ENCODE measurements at regions of chr13 and their contacts with region 1.

Region 1: GRCh38 chr13:51814825-51815650 is 11.1 kb upstream of the DHRS12 start:
- DNase-seq: peak; percentile 66
- H3K4me3 Mint-ChIP-seq: peak overlapping the region; percentile 37
- H3K27ac Mint-ChIP-seq: no peak overlapping the region
- H3K4me1 Mint-ChIP-seq: peaks cover 52% of the 10 kb centered on the region
- H3K27me3 Mint-ChIP-seq: peaks cover 3% of the 10 kb centered on the region

Region 2: DNA sequence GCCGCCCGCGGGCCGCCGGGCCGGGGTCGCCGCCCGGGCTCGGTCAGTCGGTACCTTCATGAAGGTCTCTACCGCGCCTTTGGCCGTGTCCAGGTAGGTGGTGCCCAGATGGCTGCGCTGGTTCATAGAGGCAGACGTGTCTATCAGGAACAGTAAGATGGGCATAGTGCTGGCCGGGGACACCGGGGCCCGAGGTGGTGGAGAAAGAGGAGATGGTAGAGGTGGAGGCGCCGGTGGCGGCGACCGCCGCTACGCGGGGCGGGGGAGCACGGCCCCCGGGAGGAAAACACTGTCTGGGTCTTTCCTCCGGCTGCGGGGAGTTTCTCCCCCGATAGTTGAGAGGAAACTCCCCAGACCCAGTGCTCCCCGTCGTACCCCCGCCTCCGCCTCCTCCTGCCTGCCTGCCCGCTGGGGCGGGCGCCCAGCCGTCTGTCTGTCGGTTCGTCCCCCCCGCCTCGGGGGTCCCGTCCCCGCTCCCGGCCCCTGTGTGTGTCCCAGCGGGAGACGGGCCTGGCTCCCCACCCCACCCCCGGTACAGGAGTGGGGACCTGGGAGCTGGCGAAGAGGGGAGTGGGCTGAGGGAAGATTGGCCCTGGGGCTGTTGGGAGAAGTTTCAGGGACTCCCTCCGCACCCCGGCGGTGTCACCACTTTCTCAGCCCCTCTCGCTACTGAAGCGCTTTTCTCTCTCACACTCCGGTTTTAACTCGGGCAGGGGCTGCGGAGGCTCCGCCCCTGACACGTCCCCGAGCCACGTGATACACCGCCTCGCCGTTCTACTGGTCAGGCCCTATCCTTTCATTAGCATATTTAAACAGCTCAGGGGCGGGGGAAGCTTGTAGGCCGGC is 362.5 kb before region 1 on chr13 and contains the start of gene INTS6:
- intact Hi-C with region 1: no loop called
- DNase-seq: peak; percentile 99
- H3K4me3 Mint-ChIP-seq: peak within 1 kb of the TSS; percentile 92
- H3K27ac Mint-ChIP-seq: peak within 1 kb of the TSS; percentile 98
- H3K4me1 Mint-ChIP-seq: peaks cover 52% of the 10 kb centered on the region
- H3K27me3 Mint-ChIP-seq: no peaks in the 10 kb centered on the region
- total RNA-seq, gene INTS6: 76.6 and 81.7 TPM in 2 replicates

Region 3: DNA sequence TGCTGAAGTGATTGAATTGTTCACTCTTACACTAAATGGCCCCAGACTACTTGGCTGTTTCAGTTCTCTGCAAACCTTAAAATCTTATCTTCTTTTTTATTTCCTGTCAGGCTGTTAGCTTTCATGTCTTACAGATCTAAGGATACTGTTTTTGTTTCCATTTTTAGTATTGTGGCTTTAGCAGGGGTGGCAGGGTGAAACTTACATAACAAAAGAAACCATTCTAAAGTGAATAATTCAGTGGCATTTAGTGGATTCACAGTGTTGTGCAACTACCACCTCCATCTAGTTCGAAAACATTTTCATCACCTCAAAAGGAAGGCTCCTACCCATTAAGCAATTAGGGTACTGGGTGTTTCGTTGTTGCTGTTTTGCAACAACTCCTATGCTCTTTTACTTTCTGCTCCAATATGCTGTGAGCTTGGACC is 10.1 kb after region 1 on chr13:
- intact Hi-C with region 1: loop called (anchors 1 kb)
- DNase-seq: no peak
- H3K4me3 Mint-ChIP-seq: peak overlapping the region; percentile 8
- H3K27ac Mint-ChIP-seq: peak overlapping the region; percentile 71
- H3K4me1 Mint-ChIP-seq: peaks cover 84% of the 10 kb centered on the region
- H3K27me3 Mint-ChIP-seq: peaks cover 4% of the 10 kb centered on the region

Region 4: DNA sequence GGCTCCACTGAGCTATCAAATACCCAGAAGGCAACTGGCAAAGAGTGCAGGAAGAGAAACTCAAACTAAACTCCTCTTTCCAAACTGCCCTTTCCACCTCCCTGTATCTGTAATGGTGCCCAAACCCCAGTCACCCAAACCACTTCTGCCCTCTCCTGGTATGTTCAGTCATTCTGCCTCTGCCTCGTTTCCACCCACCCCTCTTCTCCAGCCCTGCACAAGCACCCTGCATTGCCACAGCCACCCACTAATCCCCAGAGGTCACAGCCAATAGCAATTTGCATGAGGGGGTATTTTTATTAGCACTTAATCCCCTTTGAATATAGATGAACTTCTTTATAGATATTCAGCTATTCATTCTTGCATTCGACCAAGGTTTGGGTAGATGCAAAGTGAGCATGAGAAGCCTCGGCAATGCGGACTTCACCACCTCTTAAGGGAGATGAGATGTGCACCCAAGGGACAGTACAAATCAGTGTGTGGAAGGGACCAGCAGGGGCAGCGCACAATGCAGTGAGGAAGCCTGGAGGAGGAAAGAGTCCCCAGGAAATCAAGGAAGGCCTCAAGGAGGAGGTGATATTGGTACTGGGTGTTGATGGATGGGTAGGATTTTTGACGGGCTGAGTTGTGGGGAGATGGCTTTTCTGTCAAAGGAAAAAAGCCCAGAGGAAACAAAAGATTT is 17.6 kb after region 1 on chr13:
- intact Hi-C with region 1: loop called (anchors 1 kb)
- DNase-seq: no peak
- H3K4me3 Mint-ChIP-seq: no peak overlapping the region
- H3K27ac Mint-ChIP-seq: no peak overlapping the region
- H3K4me1 Mint-ChIP-seq: peaks cover 38% of the 10 kb centered on the region
- H3K27me3 Mint-ChIP-seq: peaks cover 8% of the 10 kb centered on the region

Region 5: GRCh38 chr13:51844862-51845573 is 30.0 kb after region 1 on chr13 and contains the start of gene TMEM272:
- intact Hi-C with region 1: loop called (anchors 1 kb)
- DNase-seq: peak; percentile 28
- H3K4me3 Mint-ChIP-seq: peak within 1 kb of the TSS; percentile 45
- H3K27ac Mint-ChIP-seq: peak within 1 kb of the TSS; percentile 70
- H3K4me1 Mint-ChIP-seq: peaks cover 12% of the 10 kb centered on the region
- H3K27me3 Mint-ChIP-seq: peaks cover 12% of the 10 kb centered on the region
- total RNA-seq, gene TMEM272: 0.26 and 0.88 TPM in 2 replicates

Measured in activated T-helper 1 cell treated with anti-CD3 and anti-CD28 coated beads, Interleukin-12 subunit alpha, Interleukin-12 subunit beta, Interleukin-2, Interleukin-4 antibody, amounts not matched to agents 30 ng/mL and 10 ng/mL and 1 ng/mL, durations not matched to agents 14 hours and 24 hours and 36 hours (primary cell).